ENCODE measurements at regions of chr5 and their contacts with region 1.

Region 1: GRCh38 chr5:1161833-1162229 is 39.6 kb upstream of the SLC6A19 start:
- DNase-seq: peak; percentile 81
- ATAC-seq: peak; percentile 68
- H3K4me3 ChIP-seq: peak overlapping the region; percentile 45; the same call in 1 of the 2 replicates
- H3K27ac ChIP-seq: peak overlapping the region; percentile 98
- H3K4me1 ChIP-seq: peaks cover 20% of the 10 kb centered on the region
- H3K27me3 ChIP-seq: no peaks in the 10 kb centered on the region
- CTCF ChIP-seq: no peak; the same call in 1 of the 2 replicates

Region 2: GRCh38 chr5:1111727-1112289 is 50.0 kb before region 1 on chr5 and contains the start of gene SLC12A7:
- CTCF ChIA-PET with region 1: no interaction called
- POLR2A ChIA-PET with region 1: no interaction called
- intact Hi-C with region 1: loop called (anchors 2 kb)
- DNase-seq: peak; percentile 77
- ATAC-seq: peak; percentile 60
- H3K4me3 ChIP-seq: peak within 1 kb of the TSS; percentile 89
- H3K27ac ChIP-seq: peak within 1 kb of the TSS; percentile 86
- H3K4me1 ChIP-seq: peaks cover 26% of the 10 kb centered on the region
- H3K27me3 ChIP-seq: no peaks in the 10 kb centered on the region
- CTCF ChIP-seq: no peak
- total RNA-seq, gene SLC12A7: 48.2 and 58.3 TPM in 2 replicates

Region 3: GRCh38 chr5:1174122-1174936 is 12.5 kb after region 1 on chr5:
- CTCF ChIA-PET with region 1: interaction called, 17 read pairs
- POLR2A ChIA-PET with region 1: interaction called, 3 read pairs
- intact Hi-C with region 1: no loop called
- DNase-seq: peak; percentile 95
- ATAC-seq: peak; percentile 90
- H3K4me3 ChIP-seq: peak overlapping the region; percentile 61
- H3K27ac ChIP-seq: no peak overlapping the region
- H3K4me1 ChIP-seq: peaks cover 8% of the 10 kb centered on the region
- H3K27me3 ChIP-seq: no peaks in the 10 kb centered on the region
- CTCF ChIP-seq: peak; percentile 91

Measured in PC-3 (cell line).